ENCODE measurements at regions of chr17 and their contacts with region 1.

Region 1: GRCh38 chr17:8057691-8058114 is 18.8 kb downstream of the ALOX15B start:
- DNase-seq: peak; percentile 31 to 83
- ATAC-seq: peak; percentile 83 to 90 (median 85)
- H3K4me3 ChIP-seq: no peak overlapping the region
- H3K4me3 Mint-ChIP-seq: peak overlapping the region; percentile 45
- H3K27ac ChIP-seq: no peak overlapping the region
- H3K27ac Mint-ChIP-seq: no peak overlapping the region
- H3K4me1 ChIP-seq: peaks cover 30% of the 10 kb centered on the region
- H3K4me1 Mint-ChIP-seq: peaks cover 23 to 36% of the 10 kb centered on the region in 2 donors
- H3K27me3 ChIP-seq: peaks cover 9% of the 10 kb centered on the region
- H3K27me3 Mint-ChIP-seq: peaks cover 17 to 41% of the 10 kb centered on the region in 2 donors
- CTCF ChIP-seq: peak; percentile 81

Region 2: GRCh38 chr17:7745748-7746470 is 311.8 kb before region 1 on chr17:
- intact Hi-C with region 1: loop called (anchors 1 kb)
- DNase-seq: no peak
- ATAC-seq: no peak
- H3K4me3 ChIP-seq: no peak overlapping the region
- H3K4me3 Mint-ChIP-seq: no peak overlapping the region
- H3K27ac ChIP-seq: no peak overlapping the region
- H3K27ac Mint-ChIP-seq: no peak overlapping the region
- H3K4me1 ChIP-seq: no peaks in the 10 kb centered on the region
- H3K4me1 Mint-ChIP-seq: no peaks in the 10 kb centered on the region
- H3K27me3 ChIP-seq: no peaks in the 10 kb centered on the region
- H3K27me3 Mint-ChIP-seq: peaks cover 1 to 7% of the 10 kb centered on the region in 2 donors
- CTCF ChIP-seq: no peak

Region 3: DNA sequence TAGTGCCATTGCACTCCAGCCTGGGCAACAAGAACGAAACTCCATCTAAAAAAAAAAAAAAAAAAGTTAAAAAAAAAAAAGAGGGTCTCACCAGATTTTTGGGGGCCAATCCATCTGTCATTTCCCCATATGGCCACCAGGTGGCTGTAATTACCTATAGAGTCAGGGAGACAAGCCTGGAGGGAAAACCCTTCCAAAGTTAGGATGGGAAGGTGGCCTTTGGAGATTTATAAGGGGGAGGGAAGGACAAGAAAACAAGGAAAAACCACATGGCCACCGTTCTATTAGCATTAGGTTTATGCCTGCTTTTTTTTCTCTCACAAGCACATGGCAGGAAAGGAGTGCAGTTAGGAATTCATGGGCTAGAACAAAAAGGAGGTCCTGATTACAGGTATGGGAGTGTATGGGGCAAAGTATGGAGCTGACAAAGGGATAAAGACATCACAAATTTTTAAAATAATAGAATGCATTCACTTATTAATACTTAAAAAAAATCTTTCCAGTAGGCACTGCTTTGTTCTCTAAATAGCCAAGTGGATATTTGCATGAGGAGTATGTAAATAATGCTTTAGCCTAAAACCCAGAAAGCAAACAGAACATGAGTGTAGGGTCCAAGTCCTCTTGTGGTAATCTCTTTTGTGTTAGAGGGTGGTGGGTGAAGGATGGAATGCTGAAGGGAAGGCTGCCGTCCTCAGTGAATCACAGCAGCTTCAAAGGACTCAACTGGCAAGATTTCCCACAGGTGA is 194.8 kb before region 1 on chr17:
- intact Hi-C with region 1: loop called (anchors 2 kb)
- DNase-seq: peak; percentile 25 to 76
- ATAC-seq: no peak
- H3K4me3 ChIP-seq: no peak overlapping the region
- H3K4me3 Mint-ChIP-seq: no peak overlapping the region
- H3K27ac ChIP-seq: no peak overlapping the region
- H3K27ac Mint-ChIP-seq: no peak overlapping the region
- H3K4me1 ChIP-seq: peaks cover 18% of the 10 kb centered on the region
- H3K4me1 Mint-ChIP-seq: peaks cover 20 to 23% of the 10 kb centered on the region in 2 donors
- H3K27me3 ChIP-seq: no peaks in the 10 kb centered on the region
- H3K27me3 Mint-ChIP-seq: no peaks in the 10 kb centered on the region
- CTCF ChIP-seq: peak; percentile 84

Region 4: DNA sequence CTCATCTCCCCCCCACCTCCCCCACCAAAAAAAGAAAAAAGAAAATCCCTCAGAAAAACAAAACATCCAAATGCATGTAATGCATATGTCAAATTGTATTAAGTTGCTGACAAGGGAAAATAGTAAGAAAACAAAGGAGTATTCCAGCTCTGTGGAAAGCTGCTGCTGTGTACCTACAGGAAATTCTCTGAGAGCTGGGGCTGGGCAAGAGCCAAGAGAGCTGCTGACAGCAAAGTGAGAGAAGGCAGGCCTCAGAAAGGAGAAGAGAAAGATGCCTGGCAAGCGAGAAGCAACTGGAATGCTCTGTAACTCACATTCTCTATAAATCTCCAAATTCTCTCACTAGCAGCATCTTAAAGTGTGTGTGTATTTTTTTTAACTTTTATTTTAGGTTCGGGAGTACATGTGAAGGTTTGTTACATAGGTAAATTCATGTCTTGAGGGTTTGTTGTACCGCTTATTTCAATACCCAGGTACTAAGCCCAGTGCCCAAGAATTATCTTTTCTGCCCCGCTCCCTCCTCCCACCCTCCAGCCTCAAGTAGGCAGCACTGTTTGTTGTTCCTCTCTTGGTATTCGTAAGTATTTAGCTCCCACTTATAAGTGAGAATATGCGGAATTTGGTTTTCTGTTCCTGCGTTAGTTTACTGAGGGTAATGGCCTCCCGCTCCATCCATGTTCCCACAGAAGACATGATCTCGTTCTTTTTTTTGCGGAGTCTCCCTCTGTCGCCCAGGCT is 101.3 kb before region 1 on chr17:
- intact Hi-C with region 1: no loop called
- DNase-seq: no peak
- ATAC-seq: no peak
- H3K4me3 ChIP-seq: no peak overlapping the region
- H3K4me3 Mint-ChIP-seq: no peak overlapping the region
- H3K27ac ChIP-seq: no peak overlapping the region
- H3K27ac Mint-ChIP-seq: no peak overlapping the region
- H3K4me1 ChIP-seq: peaks cover 4% of the 10 kb centered on the region
- H3K4me1 Mint-ChIP-seq: no peaks in the 10 kb centered on the region
- H3K27me3 ChIP-seq: no peaks in the 10 kb centered on the region
- H3K27me3 Mint-ChIP-seq: peaks cover 0 to 5% of the 10 kb centered on the region in 2 donors
- CTCF ChIP-seq: no peak

Region 5: DNA sequence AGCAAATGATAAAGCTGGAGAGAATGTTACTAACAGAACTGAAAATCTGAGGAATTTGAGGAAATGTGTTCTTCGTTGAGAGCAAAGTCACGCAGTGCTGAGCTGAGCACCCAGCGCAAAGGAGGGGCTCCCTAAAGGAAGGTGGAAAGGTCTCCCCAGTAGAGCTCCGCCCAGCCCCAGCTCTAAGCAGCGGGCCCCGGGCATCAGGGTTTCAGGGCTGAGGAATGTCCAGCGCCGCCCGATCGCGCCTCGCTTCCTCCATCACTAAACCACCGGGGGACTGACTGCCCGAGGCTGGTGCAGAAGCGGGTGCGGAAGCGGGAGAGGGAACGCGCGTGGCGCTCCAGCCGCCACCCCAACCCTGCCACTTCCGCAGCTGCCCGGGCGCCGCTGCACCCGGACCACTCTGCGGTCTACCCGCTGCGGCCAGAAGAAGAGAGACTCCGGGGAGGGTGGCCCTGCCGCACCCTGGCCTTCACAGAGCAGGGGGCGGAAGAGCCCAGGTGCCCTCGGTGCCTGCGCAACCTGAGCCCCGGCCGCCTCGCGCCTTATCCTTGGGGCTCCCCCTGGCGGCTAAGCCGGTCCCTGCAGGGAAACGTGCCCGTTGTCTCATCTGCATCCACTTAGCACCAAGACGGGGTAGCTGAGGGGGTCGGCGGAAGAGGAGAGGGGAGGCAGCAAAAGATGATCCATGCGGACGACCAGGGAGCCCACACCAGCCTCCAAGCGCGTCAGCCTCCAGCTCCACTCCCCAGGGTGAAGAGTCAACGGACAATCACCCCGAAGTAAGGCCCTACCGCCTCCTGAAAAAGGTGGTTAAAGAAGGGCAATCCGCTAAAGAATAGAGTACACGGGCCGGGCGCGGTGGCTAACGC is 67.7 kb before region 1 on chr17:
- intact Hi-C with region 1: loop called (anchors 1 kb)
- DNase-seq: peak; percentile 94
- ATAC-seq: peak; percentile 89 to 93 (median 91)
- H3K4me3 ChIP-seq: peak overlapping the region; percentile 37
- H3K4me3 Mint-ChIP-seq: peak overlapping the region; percentile 89
- H3K27ac ChIP-seq: peak overlapping the region; percentile 48
- H3K27ac Mint-ChIP-seq: peak overlapping the region; percentile 83 to 91
- H3K4me1 ChIP-seq: peaks cover 16% of the 10 kb centered on the region
- H3K4me1 Mint-ChIP-seq: peaks cover 22 to 25% of the 10 kb centered on the region in 2 donors
- H3K27me3 ChIP-seq: no peaks in the 10 kb centered on the region
- H3K27me3 Mint-ChIP-seq: peaks cover 9 to 11% of the 10 kb centered on the region in 2 donors
- CTCF ChIP-seq: peak; percentile 90

Region 6: GRCh38 chr17:8073627-8074484 is 16.2 kb after region 1 on chr17:
- intact Hi-C with region 1: loop called (anchors 2 kb)
- DNase-seq: peak; percentile 85 to 95
- ATAC-seq: peak; percentile 89 to 97 (median 95)
- H3K4me3 ChIP-seq: no peak overlapping the region
- H3K4me3 Mint-ChIP-seq: peak overlapping the region; percentile 83
- H3K27ac ChIP-seq: no peak overlapping the region
- H3K27ac Mint-ChIP-seq: peak overlapping the region; percentile 77 to 93
- H3K4me1 ChIP-seq: peaks cover 38% of the 10 kb centered on the region
- H3K4me1 Mint-ChIP-seq: peaks cover 16 to 31% of the 10 kb centered on the region in 2 donors
- H3K27me3 ChIP-seq: peaks cover 37% of the 10 kb centered on the region
- H3K27me3 Mint-ChIP-seq: peaks cover 45 to 52% of the 10 kb centered on the region in 2 donors
- CTCF ChIP-seq: peak; percentile 92

Region 7: DNA sequence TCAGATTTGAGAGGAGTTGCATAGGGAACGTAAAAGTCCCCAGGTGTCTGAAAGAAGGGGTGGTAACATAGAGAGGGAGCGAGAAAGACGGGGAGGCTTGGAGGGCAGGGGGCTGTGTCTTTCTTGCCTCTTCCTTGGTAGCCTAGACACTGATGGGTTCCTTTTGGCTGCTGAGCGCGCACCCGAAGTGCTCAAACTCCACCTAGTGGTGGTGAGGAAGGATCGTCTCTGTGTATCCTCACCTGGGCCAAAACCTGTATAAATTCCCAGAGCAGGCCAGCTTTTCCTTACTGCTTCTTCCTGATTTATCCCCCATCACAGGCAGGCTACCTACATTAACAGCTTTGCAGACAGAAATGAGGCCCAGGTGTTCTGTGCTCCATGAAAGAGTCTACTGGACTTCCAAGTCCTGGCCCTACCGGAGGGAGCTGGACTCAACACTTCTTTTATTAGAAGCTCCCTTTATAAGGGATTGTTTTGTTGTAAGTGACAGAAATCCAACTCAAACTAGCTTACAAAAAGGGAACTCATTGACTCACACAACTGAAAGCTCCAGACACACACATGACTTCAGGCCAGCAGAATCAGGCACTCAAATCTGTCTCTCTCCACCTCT is 243.0 kb after region 1 on chr17:
- intact Hi-C with region 1: loop called (anchors 5 kb)
- DNase-seq: peak; percentile 45 to 87
- ATAC-seq: peak; percentile 91 to 96 (median 93)
- H3K4me3 ChIP-seq: no peak overlapping the region
- H3K4me3 Mint-ChIP-seq: no peak overlapping the region
- H3K27ac ChIP-seq: no peak overlapping the region
- H3K27ac Mint-ChIP-seq: peak overlapping the region in 1 of 2 donors; percentile 5
- H3K4me1 ChIP-seq: peaks cover 6% of the 10 kb centered on the region
- H3K4me1 Mint-ChIP-seq: peaks cover 13 to 16% of the 10 kb centered on the region in 2 donors
- H3K27me3 ChIP-seq: no peaks in the 10 kb centered on the region
- H3K27me3 Mint-ChIP-seq: no peaks in the 10 kb centered on the region
- CTCF ChIP-seq: peak; percentile 87

Measured in natural killer cell (primary cell).